ENCODE measurements at regions of chr1 and their contacts with region 1.

Region 1: GRCh38 chr1:32464716-32465577 is at the start of gene ZBTB8B:
- DNase-seq: peak; percentile 51 to 59
- ATAC-seq: peak; percentile 88 to 94
- H3K4me3 ChIP-seq: peak within 1 kb of the TSS; percentile 50
- H3K27ac ChIP-seq: 0 out of 6 replicates have a peak within 1 kb of the TSS, but pooled peaks of 1 of the 2 experiments have one; percentile 38
- H3K4me1 ChIP-seq: 0 out of 3 replicates have a peak, but pooled peaks cover 6% of the 10 kb centered on the region
- CTCF ChIP-seq: no peak
- EP300 ChIP-seq: no peak
- POLR2A ChIP-seq: no peak
- RAD21 ChIP-seq: no peak
- polyA plus RNA-seq, gene ZBTB8B: 0.01 TPM in 2 replicates

Region 2: DNA sequence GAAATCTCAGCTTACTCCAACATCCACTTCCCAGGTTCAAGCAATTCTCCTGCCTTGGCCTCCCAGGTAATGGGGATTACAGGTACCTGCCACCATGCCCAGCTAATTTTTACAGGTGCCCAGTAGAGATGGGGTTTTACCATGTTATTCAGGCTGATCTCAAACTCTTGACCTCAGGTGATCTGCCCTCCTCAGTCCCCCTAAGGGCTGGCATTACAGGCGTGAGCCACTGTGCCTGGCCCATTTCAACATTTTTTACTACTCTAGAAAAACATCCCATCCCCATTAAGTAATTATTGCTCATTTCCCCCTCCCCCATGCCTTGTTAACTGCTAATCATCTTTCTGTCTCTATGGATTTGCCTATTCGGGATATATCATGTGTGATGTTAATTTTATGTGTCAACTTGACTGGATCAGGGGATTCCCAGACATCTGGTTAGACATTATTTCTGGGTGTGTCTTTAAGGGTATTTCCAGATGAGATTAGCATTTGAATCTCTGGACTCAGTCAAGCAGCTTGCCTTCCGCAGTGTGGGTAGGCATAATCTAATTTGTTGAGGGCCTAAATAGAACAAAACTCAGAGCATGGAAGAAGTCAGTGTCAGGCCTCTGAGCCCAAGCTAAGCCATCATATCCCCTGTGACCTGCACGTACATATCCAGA is 33.1 kb before region 1 on chr1:
- CTCF ChIA-PET with region 1: no interaction called
- POLR2A ChIA-PET with region 1: no interaction called
- DNase-seq: no peak
- ATAC-seq: no peak
- H3K4me3 ChIP-seq: no peak overlapping the region
- H3K27ac ChIP-seq: no peak overlapping the region
- H3K4me1 ChIP-seq: 0 out of 3 replicates have a peak, but pooled peaks cover 5% of the 10 kb centered on the region
- CTCF ChIP-seq: no peak
- EP300 ChIP-seq: no peak
- POLR2A ChIP-seq: no peak
- RAD21 ChIP-seq: no peak

Region 3: DNA sequence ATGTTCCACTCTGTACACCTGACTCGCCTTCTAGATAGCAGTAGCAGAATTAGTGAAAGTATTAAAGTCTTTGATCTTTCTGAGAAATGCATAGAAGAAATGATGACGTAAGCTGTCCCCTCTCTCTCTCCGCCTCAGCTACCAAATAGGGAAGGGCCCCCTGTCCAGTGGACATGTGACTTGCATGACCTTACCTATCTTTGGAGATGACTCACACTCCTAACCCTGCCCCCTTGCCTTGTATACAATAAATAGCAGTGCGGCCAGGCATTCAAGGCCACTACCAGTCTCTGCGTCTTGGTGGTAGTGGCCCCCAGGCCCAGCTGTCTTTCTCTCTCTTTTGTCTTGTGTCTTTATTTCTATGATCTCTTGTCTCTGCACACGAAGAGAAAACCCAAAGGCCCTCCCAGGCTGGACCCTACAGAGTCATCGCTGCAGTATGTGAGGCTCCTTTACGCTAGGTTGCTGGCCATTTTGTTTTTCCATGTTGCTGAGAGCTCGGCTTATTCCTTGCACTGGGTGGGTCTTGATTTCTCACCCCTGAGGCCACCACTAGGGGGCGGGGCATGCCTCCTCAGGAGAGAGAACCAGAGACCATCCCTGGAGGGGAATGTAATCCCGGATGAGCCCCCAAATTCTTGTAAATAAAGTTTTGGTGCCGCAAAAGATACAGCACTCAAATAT is 16.0 kb before region 1 on chr1:
- CTCF ChIA-PET with region 1: interaction called, 13 read pairs
- POLR2A ChIA-PET with region 1: no interaction called
- DNase-seq: peak; percentile 41 to 68
- ATAC-seq: peak; percentile 95 to 97
- H3K4me3 ChIP-seq: no peak overlapping the region
- H3K27ac ChIP-seq: no peak overlapping the region
- H3K4me1 ChIP-seq: peaks cover 5% of the 10 kb centered on the region; the same call in 2 of the 3 replicates
- CTCF ChIP-seq: peak; percentile 39; the same call in 2 of the 3 replicates
- EP300 ChIP-seq: no peak
- POLR2A ChIP-seq: no peak
- RAD21 ChIP-seq: peak; percentile 19 to 53; a peak in 2 of 5 replicates

Measured in A549 (cell line).